ENCODE measurements at regions of chr4 and their contacts with region 1.

Region 1: DNA sequence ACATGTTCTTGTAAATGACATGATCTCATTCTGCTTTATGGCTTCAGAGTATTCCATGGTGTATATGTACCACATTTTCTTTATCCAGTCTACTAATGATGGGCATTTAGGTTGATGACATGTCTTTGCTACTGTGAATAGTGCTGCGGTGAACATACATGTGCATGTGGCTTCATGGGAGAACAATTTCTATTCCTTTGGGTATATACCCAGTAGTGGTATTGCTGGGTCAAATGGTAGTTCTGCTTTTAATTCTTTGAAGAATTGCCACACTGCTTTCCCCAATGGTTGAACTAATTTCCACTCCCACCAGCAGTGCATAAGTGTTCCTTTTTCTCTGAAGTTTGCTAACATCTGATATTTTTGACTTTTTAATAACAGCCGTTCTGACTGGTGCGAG is 1080.3 kb downstream of the CCSER1 start:
- DNase-seq: no peak
- H3K4me3 ChIP-seq: no peak overlapping the region
- H3K4me3 Mint-ChIP-seq: no peak overlapping the region
- H3K27ac ChIP-seq: no peak overlapping the region
- H3K27ac Mint-ChIP-seq: no peak overlapping the region
- H3K4me1 ChIP-seq: no peaks in the 10 kb centered on the region
- H3K4me1 Mint-ChIP-seq: no peaks in the 10 kb centered on the region
- H3K27me3 ChIP-seq: no peaks in the 10 kb centered on the region
- H3K27me3 Mint-ChIP-seq: no peaks in the 10 kb centered on the region

Region 2: GRCh38 chr4:90689739-90690138 is 517.8 kb before region 1 on chr4:
- CTCF ChIA-PET with region 1: no interaction called
- POLR2A ChIA-PET with region 1: no interaction called
- intact Hi-C with region 1: loop called (anchors 5 kb)
- DNase-seq: no peak
- H3K4me3 ChIP-seq: no peak overlapping the region
- H3K4me3 Mint-ChIP-seq: no peak overlapping the region
- H3K27ac ChIP-seq: no peak overlapping the region
- H3K27ac Mint-ChIP-seq: no peak overlapping the region
- H3K4me1 ChIP-seq: no peaks in the 10 kb centered on the region
- H3K4me1 Mint-ChIP-seq: no peaks in the 10 kb centered on the region
- H3K27me3 ChIP-seq: no peaks in the 10 kb centered on the region
- H3K27me3 Mint-ChIP-seq: no peaks in the 10 kb centered on the region

Region 3: DNA sequence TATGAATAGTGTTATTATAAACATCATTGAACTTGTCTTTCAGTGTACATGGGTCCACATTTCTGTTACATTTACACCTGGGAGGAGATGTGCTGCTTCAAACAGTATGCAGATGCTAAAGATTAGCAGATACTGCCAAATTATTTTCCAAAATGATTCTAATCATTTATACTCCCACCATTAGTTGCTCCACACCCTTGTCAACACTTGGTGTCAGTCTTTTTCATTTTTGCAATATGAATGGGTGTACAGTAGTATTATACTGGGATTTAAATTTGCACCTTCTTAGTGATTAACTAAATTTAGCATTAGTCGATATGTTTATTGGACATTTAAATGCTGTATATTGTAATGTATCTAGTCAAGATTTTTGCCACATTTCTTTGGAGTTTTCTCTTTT is 964.7 kb after region 1 on chr4:
- CTCF ChIA-PET with region 1: no interaction called
- POLR2A ChIA-PET with region 1: no interaction called
- intact Hi-C with region 1: no loop called
- DNase-seq: no peak
- H3K4me3 ChIP-seq: no peak overlapping the region
- H3K4me3 Mint-ChIP-seq: no peak overlapping the region
- H3K27ac ChIP-seq: no peak overlapping the region
- H3K27ac Mint-ChIP-seq: no peak overlapping the region
- H3K4me1 ChIP-seq: no peaks in the 10 kb centered on the region
- H3K4me1 Mint-ChIP-seq: no peaks in the 10 kb centered on the region
- H3K27me3 ChIP-seq: no peaks in the 10 kb centered on the region
- H3K27me3 Mint-ChIP-seq: no peaks in the 10 kb centered on the region